ENCODE measurements at regions of chrX and their contacts with region 1.

Region 1: GRCh38 chrX:71532753-71533425 is at the start of gene OGT:
- DNase-seq: peak; percentile 91 to 92
- H3K4me3 ChIP-seq: peak within 1 kb of the TSS; percentile 96
- H3K27ac ChIP-seq: peak within 1 kb of the TSS; percentile 88
- H3K4me1 ChIP-seq: peaks cover 22% of the 10 kb centered on the region
- H3K27me3 ChIP-seq: no peaks in the 10 kb centered on the region
- CTCF ChIP-seq: no peak
- total RNA-seq, gene OGT: 123 and 159 TPM in 2 replicates

Region 2: DNA sequence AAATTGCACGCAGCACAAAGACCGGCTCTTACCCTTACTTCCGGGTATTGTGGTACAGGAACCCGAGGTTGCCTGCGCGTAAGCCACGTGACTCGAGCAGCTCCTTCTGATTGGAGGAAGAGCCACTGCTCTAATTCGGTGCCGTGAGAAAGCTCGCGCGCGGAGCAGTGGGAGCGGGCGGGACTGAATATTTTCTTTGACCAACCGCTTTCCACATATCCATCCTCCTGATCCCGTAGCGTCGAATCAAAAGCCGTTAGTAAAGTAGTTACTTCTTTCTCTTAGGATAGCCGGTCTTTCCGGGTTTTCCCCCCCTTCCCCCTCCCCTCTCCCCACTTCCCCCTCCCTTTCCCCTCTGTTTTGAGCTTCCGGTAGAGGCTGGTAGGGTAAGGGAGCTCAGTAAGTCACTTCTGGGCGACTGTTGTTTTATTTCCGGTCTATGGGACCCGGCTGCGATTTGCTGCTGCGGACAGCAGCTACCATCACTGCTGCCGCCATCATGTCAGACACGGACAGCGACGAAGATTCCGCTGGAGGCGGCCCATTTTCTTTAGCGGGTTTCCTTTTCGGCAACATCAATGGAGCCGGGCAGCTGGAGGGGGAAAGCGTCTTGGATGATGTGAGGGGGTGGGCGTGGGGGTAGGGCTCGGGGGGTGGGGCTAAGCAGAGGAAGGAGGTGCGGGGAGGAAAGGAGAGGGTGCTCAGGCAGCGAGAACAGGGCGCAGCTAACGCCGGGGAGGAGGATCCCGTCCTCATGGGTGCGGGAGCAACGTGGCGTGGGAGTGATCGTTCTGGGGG is 166.8 kb before region 1 on chrX and contains the start of gene TAF1:
- CTCF ChIA-PET with region 1: no interaction called
- POLR2A ChIA-PET with region 1: interaction called, 11 read pairs
- intact Hi-C with region 1: no loop called
- DNase-seq: peak; percentile 91 to 97
- H3K4me3 ChIP-seq: peak within 1 kb of the TSS; percentile 92
- H3K27ac ChIP-seq: peak within 1 kb of the TSS; percentile 94
- H3K4me1 ChIP-seq: peaks cover 15% of the 10 kb centered on the region
- H3K27me3 ChIP-seq: no peaks in the 10 kb centered on the region
- CTCF ChIP-seq: no peak
- total RNA-seq, gene TAF1: 45.9 and 49.6 TPM in 2 replicates

Region 3: GRCh38 chrX:71454222-71454621 is 78.7 kb before region 1 on chrX:
- CTCF ChIA-PET with region 1: no interaction called
- POLR2A ChIA-PET with region 1: no interaction called
- intact Hi-C with region 1: loop called (anchors 10 kb)
- DNase-seq: no peak
- H3K4me3 ChIP-seq: no peak overlapping the region
- H3K27ac ChIP-seq: no peak overlapping the region
- H3K4me1 ChIP-seq: no peaks in the 10 kb centered on the region
- H3K27me3 ChIP-seq: no peaks in the 10 kb centered on the region
- CTCF ChIP-seq: no peak

Region 4: GRCh38 chrX:71492231-71493065 is 40.4 kb before region 1 on chrX:
- CTCF ChIA-PET with region 1: no interaction called
- POLR2A ChIA-PET with region 1: interaction called, 16 read pairs
- intact Hi-C with region 1: loop called (anchors 2 kb)
- DNase-seq: peak in 1 of 2 experiments; percentile 25
- H3K4me3 ChIP-seq: peak overlapping the region; percentile 47; the same call in 1 of the 2 replicates
- H3K27ac ChIP-seq: no peak overlapping the region
- H3K4me1 ChIP-seq: no peaks in the 10 kb centered on the region
- H3K27me3 ChIP-seq: no peaks in the 10 kb centered on the region
- CTCF ChIP-seq: no peak

Region 5: DNA sequence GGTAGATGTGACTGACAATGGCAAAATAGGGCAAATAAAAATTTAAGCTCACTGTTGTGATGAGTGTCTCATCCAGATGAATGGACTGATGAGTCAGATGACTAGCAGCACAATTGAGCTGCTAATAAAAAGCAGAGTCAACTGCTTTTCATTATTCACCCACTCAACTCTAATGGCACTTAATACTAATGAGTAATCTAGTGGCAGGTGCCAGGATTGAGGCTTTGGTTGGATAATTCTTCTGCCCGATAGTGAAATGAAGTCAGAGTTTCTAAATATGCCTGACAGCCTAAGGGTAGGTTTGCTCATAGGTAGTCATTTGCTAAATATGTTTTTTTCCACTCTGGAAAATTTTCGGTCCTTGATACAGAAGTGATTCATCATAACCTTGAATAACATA is 10.4 kb after region 1 on chrX:
- CTCF ChIA-PET with region 1: interaction called, 8 read pairs
- POLR2A ChIA-PET with region 1: interaction called, 14 read pairs
- intact Hi-C with region 1: loop called (anchors 1 kb)
- DNase-seq: peak; percentile 15 to 95
- H3K4me3 ChIP-seq: peak overlapping the region; percentile 7; the same call in 1 of the 2 replicates
- H3K27ac ChIP-seq: peak overlapping the region; percentile 77
- H3K4me1 ChIP-seq: peaks cover 51% of the 10 kb centered on the region
- H3K27me3 ChIP-seq: no peaks in the 10 kb centered on the region
- CTCF ChIP-seq: no peak